ENCODE measurements at regions of chr19 and their contacts with region 1.

Region 1: DNA sequence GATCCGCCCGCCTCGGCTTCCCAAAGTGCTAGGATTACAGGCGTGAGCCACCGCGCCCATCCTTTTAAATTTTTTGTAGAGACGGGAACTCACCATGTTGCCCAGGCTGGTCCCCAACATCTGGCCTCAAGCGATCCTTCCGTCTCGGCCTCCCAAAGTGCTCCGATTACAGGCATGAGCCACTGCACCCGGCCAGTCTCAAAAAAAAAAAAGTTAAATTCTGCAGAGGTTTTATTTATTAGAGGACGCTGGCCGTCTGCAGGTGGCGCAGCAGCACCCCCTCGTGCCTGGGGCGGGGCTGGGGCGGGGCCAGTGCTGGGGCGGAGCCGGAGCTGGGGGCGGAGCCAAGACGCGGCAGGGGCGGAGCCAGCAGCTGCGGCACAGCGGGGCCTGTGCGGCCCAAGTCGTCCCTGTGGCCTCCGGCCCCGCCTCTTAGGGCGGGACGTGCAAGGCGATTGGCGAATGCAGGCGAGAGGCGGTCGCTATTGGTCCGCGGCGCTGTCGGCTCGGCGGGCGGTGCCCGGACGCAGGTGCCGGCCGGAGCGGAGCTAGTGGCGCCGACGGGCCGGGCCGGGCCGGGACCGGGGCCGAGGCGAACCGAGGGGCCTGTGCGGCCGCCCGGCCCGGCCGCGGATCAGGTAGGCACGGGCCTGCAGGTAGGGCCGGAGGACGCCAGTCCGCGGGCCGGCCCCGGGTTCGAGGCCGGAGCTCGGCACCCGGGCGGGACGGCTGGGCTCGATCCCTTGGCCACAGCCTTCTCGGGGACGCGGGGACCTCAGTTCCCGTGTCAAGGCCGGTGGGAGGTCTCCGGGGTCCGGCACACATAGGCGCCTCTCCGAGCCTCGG is at the start of gene MARCHF2:
- DNase-seq: peak; percentile 90
- ATAC-seq: peak; percentile 99
- H3K4me3 ChIP-seq: peak within 1 kb of the TSS; percentile 66 to 67
- H3K27ac ChIP-seq: peak within 1 kb of the TSS; percentile 57
- H3K4me1 ChIP-seq: peaks cover 23 to 24% of the 10 kb centered on the region in 2 experiments
- H3K27me3 ChIP-seq: no peaks in the 10 kb centered on the region
- CTCF ChIP-seq: peak; percentile 45 to 63 (median 48); a peak in 5 of 6 replicates
- POLR2A ChIP-seq: no peak
- RAD21 ChIP-seq: peak; percentile 62
- total RNA-seq, gene MARCHF2: 22.5 TPM

Region 2: GRCh38 chr19:8423817-8424223 is 10.8 kb after region 1 on chr19:
- CTCF ChIA-PET with region 1: interaction called, 21 read pairs
- POLR2A ChIA-PET with region 1: interaction called, 12 read pairs
- RAD21 ChIA-PET with region 1: no interaction called
- intact Hi-C with region 1: no loop called
- DNase-seq: peak; percentile 85
- ATAC-seq: peak; percentile 91
- H3K4me3 ChIP-seq: peak overlapping the region in 1 of 2 experiments; percentile 16; a peak in 1 of 4 replicates
- H3K27ac ChIP-seq: peak overlapping the region; percentile 65
- H3K4me1 ChIP-seq: peaks cover 13 to 19% of the 10 kb centered on the region in 2 experiments
- H3K27me3 ChIP-seq: no peaks in the 10 kb centered on the region
- CTCF ChIP-seq: no peak
- POLR2A ChIP-seq: no peak
- RAD21 ChIP-seq: peak; percentile 23; the same call in 1 of the 2 replicates

Region 3: DNA sequence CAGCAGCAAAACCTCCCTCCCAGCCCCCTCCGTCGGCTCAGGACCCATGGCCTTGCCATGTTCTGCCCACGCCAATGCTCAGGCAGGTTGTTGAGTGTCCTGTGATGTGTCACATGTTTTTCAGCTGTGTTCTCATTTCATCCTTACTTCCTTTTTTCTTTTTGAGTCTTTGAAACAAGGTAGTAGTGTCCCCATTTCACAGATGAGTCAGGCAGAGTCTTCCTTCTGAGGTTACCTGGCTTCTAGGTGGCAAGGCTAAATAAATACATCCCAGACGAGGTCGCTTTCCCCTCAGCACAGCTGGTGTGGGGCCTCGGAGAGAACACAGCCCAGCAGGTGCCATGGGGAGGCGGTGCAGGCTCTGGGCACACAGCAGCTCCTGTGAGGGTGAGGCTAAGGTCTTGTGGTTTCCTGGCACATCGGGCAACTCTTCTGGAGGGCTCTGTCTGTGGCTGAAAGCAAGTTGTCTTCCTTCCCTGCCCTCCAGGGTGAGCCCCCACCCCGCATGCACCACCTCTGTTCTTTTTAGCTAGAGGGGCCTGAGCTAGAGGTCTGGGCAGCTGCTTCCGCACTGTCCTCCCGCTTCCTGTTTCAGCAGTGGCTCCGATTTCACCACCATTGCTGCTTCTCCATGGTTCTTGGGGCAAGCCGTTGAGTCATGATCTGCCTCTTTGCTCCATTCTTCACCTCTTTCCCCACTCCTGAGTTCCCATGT is 74.3 kb after region 1 on chr19:
- CTCF ChIA-PET with region 1: no interaction called
- POLR2A ChIA-PET with region 1: no interaction called
- RAD21 ChIA-PET with region 1: no interaction called
- intact Hi-C with region 1: no loop called
- DNase-seq: no peak
- ATAC-seq: no peak
- H3K4me3 ChIP-seq: no peak overlapping the region
- H3K27ac ChIP-seq: no peak overlapping the region
- H3K4me1 ChIP-seq: no peaks in the 10 kb centered on the region
- H3K27me3 ChIP-seq: no peaks in the 10 kb centered on the region
- CTCF ChIP-seq: 0 out of 6 replicates have a peak, but pooled peaks of 1 of the 3 experiments have one; percentile 6
- POLR2A ChIP-seq: no peak
- RAD21 ChIP-seq: no peak

Measured in HCT116 (cell line).